ENCODE measurements at regions of chr18 and their contacts with region 1.

Region 1: GRCh38 chr18:10560450-10561045 is 34.7 kb downstream of the NAPG start:
- DNase-seq: peak; percentile 73
- CTCF ChIP-seq: peak; percentile 70

Region 2: DNA sequence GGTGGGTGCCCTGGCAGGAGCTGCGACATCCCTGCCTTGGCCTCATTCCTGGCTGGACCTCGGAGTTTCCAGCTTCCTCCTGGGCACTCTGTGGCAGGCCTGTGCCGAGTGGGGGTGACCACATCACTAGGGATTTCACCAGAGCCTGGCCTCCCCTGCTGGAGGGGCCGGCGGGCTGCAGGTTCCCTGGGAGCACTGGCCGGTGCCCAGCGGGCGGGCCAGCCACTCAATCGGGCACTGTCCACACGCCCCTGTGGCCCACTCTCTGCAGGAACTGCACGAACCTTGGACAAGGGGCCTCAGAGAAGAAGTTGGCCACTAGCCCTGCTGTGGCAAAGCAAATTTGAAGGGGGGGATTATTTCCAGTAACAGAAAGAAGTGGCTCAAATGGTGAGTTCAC is 216.8 kb before region 1 on chr18:
- in situ Hi-C with region 1: no loop called
- DNase-seq: no peak
- CTCF ChIP-seq: no peak

Region 3: DNA sequence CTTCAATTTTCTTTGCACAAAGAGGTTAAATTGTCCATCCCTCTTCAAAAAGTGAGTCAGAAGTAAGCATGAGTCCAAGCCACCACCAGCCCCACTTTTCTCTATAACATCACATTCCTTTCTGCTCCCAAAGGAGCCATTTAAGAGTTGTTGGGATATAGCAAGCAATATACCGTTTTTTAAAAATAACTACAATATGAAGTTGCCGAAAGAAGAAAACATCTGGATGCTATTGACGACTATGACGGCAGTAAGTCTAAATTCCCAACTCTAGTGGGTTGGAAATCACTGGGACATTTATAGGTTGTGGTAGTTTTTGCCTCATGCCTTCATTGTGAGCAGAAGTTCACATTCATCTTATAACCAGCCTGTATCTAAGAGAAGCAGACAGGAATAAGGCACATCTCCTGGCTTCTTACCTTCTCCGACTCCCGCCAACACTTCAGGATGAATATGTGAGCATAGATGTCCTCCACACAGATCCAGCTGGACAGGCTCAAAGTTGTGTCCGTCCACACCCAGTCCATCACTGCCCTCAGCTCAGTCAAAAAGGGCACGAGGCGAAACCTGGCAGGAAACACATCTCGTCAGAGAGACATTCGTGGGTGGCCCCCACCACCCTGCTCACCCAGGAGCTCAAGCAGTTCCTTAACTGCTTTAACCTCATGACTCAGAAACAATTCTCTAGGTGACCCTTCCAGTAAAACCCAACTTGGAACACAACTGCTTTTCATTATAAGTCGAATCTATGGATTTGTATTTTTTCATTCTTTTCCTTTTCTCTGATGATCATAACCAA is 128.9 kb after region 1 on chr18:
- in situ Hi-C with region 1: loop called (anchors 25 kb)
- DNase-seq: no peak
- CTCF ChIP-seq: no peak

Region 4: GRCh38 chr18:11149441-11150270 is 589.1 kb after region 1 on chr18 and contains the start of gene PIEZO2:
- in situ Hi-C with region 1: loop called (anchors 10 kb)
- DNase-seq: peak; percentile 97
- CTCF ChIP-seq: no peak

Measured in GM13977 (cell line).